ENCODE measurements at regions of chr11 and their contacts with region 1.

Region 1: GRCh38 chr11:67630228-67630942 is 648 bp upstream of the NUDT8 start:
- DNase-seq: peak; percentile 97
- ATAC-seq: peak; percentile 79
- H3K4me3 ChIP-seq: peak overlapping the region in 4 of 5 experiments; percentile 68 to 76 (median 74)
- H3K4me3 Mint-ChIP-seq: peak overlapping the region; percentile 90
- H3K27ac ChIP-seq: peak overlapping the region; percentile 85
- H3K27ac Mint-ChIP-seq: peak overlapping the region; percentile 90
- H3K4me1 ChIP-seq: peaks cover 14 to 19% of the 10 kb centered on the region in 2 donors
- H3K4me1 Mint-ChIP-seq: peaks cover 17% of the 10 kb centered on the region
- H3K27me3 ChIP-seq: no peaks in the 10 kb centered on the region
- H3K27me3 Mint-ChIP-seq: no peaks in the 10 kb centered on the region
- CTCF ChIP-seq: peak; percentile 84

Region 2: DNA sequence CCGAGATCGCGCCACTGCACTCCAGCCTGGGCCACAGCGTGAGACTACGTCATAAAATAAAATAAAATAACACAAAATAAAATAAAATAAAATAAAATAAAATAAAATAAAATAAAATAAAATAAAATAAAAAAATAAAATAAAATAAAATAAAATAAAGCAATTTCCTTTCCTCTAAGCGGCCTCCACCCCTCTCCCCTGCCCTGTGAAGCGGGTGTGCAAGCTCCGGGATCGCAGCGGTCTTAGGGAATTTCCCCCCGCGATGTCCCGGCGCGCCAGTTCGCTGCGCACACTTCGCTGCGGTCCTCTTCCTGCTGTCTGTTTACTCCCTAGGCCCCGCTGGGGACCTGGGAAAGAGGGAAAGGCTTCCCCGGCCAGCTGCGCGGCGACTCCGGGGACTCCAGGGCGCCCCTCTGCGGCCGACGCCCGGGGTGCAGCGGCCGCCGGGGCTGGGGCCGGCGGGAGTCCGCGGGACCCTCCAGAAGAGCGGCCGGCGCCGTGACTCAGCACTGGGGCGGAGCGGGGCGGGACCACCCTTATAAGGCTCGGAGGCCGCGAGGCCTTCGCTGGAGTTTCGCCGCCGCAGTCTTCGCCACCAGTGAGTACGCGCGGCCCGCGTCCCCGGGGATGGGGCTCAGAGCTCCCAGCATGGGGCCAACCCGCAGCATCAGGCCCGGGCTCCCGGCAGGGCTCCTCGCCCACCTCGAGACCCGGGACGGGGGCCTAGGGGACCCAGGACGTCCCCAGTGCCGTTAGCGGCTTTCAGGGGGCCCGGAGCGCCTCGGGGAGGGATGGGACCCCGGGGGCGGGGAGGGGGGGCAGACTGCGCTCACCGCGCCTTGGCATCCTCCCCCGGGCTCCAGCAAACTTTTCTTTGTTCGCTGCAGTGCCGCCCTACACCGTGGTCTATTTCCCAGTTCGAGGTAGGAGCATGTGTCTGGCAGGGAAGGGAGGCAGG is 46.9 kb before region 1 on chr11 and contains the start of gene GSTP1:
- CTCF ChIA-PET with region 1: interaction called, 30 read pairs
- POLR2A ChIA-PET with region 1: interaction called, 6 read pairs
- intact Hi-C with region 1: loop called (anchors 1 kb)
- DNase-seq: peak; percentile 86
- ATAC-seq: peak; percentile 71
- H3K4me3 ChIP-seq: peak within 1 kb of the TSS; percentile 34 to 69 (median 58)
- H3K4me3 Mint-ChIP-seq: peak within 1 kb of the TSS; percentile 93
- H3K27ac ChIP-seq: peak within 1 kb of the TSS; percentile 51 to 91
- H3K27ac Mint-ChIP-seq: peak within 1 kb of the TSS; percentile 100
- H3K4me1 ChIP-seq: peaks cover 67 to 73% of the 10 kb centered on the region in 2 donors
- H3K4me1 Mint-ChIP-seq: peaks cover 68% of the 10 kb centered on the region
- H3K27me3 ChIP-seq: peaks cover 0 to 4% (median 2%) of the 10 kb centered on the region in 4 experiments
- H3K27me3 Mint-ChIP-seq: peaks cover 5% of the 10 kb centered on the region
- CTCF ChIP-seq: peak; percentile 71
- total RNA-seq, gene GSTP1: 296 and 313 TPM in 2 replicates

Region 3: GRCh38 chr11:67613960-67614715 is 16.2 kb before region 1 on chr11:
- CTCF ChIA-PET with region 1: interaction called, 85 read pairs
- POLR2A ChIA-PET with region 1: interaction called, 31 read pairs
- intact Hi-C with region 1: loop called (anchors 1 kb)
- DNase-seq: peak; percentile 97
- ATAC-seq: peak; percentile 95
- H3K4me3 ChIP-seq: peak overlapping the region in 4 of 5 experiments; percentile 38 to 58 (median 50)
- H3K4me3 Mint-ChIP-seq: peak overlapping the region; percentile 83
- H3K27ac ChIP-seq: peak overlapping the region; percentile 97 to 98
- H3K27ac Mint-ChIP-seq: peak overlapping the region; percentile 99
- H3K4me1 ChIP-seq: peaks cover 32 to 38% of the 10 kb centered on the region in 2 donors
- H3K4me1 Mint-ChIP-seq: peaks cover 45% of the 10 kb centered on the region
- H3K27me3 ChIP-seq: no peaks in the 10 kb centered on the region
- H3K27me3 Mint-ChIP-seq: no peaks in the 10 kb centered on the region
- CTCF ChIP-seq: peak; percentile 40

Region 4: DNA sequence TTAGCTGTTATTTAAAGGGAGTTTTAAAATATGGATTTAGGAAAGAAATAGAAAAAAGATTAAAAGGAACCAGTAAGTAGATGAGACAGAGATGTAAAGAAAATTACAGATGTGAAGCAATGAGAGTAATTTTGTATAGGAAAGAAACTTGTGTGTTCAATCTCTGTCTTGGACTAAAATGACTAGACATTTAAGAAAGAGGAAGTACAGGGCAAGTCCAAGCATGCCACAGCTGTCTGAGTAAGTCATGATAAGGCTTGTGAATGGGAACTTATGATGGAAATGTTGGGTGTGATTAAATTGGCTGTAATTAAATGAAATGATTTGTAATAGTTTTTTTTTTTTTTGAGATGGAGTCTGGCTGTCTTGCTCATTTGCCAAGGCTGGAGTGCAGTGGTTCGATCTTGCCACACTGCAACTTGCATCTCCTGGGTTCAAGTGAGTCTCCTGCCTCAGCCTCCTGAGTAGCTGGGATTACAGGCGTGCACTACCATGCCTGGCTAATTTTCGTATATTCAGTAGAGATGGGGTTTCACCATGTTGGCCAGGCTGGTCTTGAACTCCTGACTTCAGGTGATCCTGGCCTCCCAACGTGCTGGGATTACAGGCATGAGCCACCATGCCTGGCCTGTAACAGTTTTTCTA is 26.0 kb after region 1 on chr11:
- CTCF ChIA-PET with region 1: interaction called, 77 read pairs
- POLR2A ChIA-PET with region 1: interaction called, 4 read pairs
- intact Hi-C with region 1: loop called (anchors 1 kb)
- DNase-seq: peak; percentile 37
- ATAC-seq: no peak
- H3K4me3 ChIP-seq: no peak overlapping the region
- H3K4me3 Mint-ChIP-seq: no peak overlapping the region
- H3K27ac ChIP-seq: no peak overlapping the region
- H3K27ac Mint-ChIP-seq: no peak overlapping the region
- H3K4me1 ChIP-seq: peaks cover 8 to 11% of the 10 kb centered on the region in 2 donors
- H3K4me1 Mint-ChIP-seq: peaks cover 11% of the 10 kb centered on the region
- H3K27me3 ChIP-seq: no peaks in the 10 kb centered on the region
- H3K27me3 Mint-ChIP-seq: no peaks in the 10 kb centered on the region
- CTCF ChIP-seq: no peak

Region 5: DNA sequence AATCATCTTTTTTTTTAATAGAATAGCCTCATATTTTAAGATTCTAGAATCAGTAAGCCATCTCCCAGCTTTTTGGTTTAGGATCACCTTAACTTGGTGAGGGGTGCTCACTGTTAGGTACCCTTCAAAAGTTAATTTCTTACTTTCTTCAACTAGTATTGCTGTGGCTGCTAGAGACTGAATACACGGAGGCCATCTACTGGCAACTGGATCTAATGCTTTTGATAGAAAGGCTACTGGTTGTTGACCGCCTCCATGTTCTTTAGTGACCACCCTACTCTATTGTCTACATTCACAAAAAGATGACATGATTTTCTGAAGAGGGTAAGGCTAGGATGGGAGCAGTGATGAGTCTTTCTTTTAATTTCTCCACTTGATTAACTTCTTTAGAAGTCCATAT is 60.8 kb after region 1 on chr11:
- CTCF ChIA-PET with region 1: interaction called, 10 read pairs
- POLR2A ChIA-PET with region 1: no interaction called
- intact Hi-C with region 1: no loop called
- DNase-seq: no peak
- ATAC-seq: peak; percentile 28
- H3K4me3 ChIP-seq: no peak overlapping the region
- H3K4me3 Mint-ChIP-seq: no peak overlapping the region
- H3K27ac ChIP-seq: no peak overlapping the region
- H3K27ac Mint-ChIP-seq: no peak overlapping the region
- H3K4me1 ChIP-seq: no peaks in the 10 kb centered on the region
- H3K4me1 Mint-ChIP-seq: no peaks in the 10 kb centered on the region
- H3K27me3 ChIP-seq: peaks cover 0 to 4% (median 2%) of the 10 kb centered on the region in 4 experiments
- H3K27me3 Mint-ChIP-seq: peaks cover 30% of the 10 kb centered on the region
- CTCF ChIP-seq: no peak

Measured in B cell (primary cell).